Activated T-helper 1 cell treated with anti-CD3 and anti-CD28 coated beads, Interleukin-12 subunit alpha, Interleukin-12 subunit beta, Interleukin-2, Interleukin-4 antibody, amounts not matched to agents 30 ng/mL and 10 ng/mL and 1 ng/mL, durations not matched to agents 14 hours and 24 hours and 36 hours (primary cell): ENCODE measurements at regions of chr12 and their contacts with region 1.

Region 1: GRCh38 chr12:27821259-27821973 is 41.4 kb upstream of the MANSC4 start:
- DNase-seq: peak; percentile 33
- H3K4me3 Mint-ChIP-seq: peak overlapping the region; percentile 32
- H3K27ac Mint-ChIP-seq: peak overlapping the region; percentile 91
- H3K4me1 Mint-ChIP-seq: peaks cover 71% of the 10 kb centered on the region
- H3K27me3 Mint-ChIP-seq: peaks cover 22% of the 10 kb centered on the region

Region 2: GRCh38 chr12:27024291-27024690 is 797.1 kb before region 1 on chr12:
- intact Hi-C with region 1: loop called (anchors 5 kb)
- DNase-seq: no peak
- H3K4me3 Mint-ChIP-seq: peak overlapping the region; percentile 43
- H3K27ac Mint-ChIP-seq: no peak overlapping the region
- H3K4me1 Mint-ChIP-seq: peaks cover 46% of the 10 kb centered on the region
- H3K27me3 Mint-ChIP-seq: peaks cover 2% of the 10 kb centered on the region

Region 3: DNA sequence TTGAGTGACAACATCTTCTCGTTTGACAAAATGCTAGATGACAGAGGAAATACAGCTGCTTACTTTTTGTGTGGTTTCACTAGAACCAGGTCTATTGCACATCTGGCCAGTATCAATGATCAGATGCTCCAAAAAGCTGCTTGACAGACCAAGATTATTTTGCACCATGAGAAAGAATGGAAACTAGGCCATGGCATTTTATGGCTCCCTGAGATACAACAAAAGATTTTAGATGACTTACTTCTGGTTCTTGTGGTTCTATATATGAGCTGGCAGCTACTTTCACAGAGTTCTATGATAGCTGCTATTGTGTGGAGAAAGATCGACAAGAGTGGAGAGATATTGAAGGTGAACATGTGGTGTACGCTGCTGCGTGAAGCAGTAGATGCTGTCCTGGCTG is 323.3 kb before region 1 on chr12:
- intact Hi-C with region 1: loop called (anchors 1 kb)
- DNase-seq: peak; percentile 16
- H3K4me3 Mint-ChIP-seq: peak overlapping the region; percentile 3
- H3K27ac Mint-ChIP-seq: peak overlapping the region; percentile 76
- H3K4me1 Mint-ChIP-seq: peaks cover 53% of the 10 kb centered on the region
- H3K27me3 Mint-ChIP-seq: no peaks in the 10 kb centered on the region

Region 4: GRCh38 chr12:27785882-27786570 is 35.4 kb before region 1 on chr12:
- intact Hi-C with region 1: loop called (anchors 1 kb)
- DNase-seq: no peak
- H3K4me3 Mint-ChIP-seq: no peak overlapping the region
- H3K27ac Mint-ChIP-seq: peak overlapping the region; percentile 68
- H3K4me1 Mint-ChIP-seq: peaks cover 40% of the 10 kb centered on the region
- H3K27me3 Mint-ChIP-seq: no peaks in the 10 kb centered on the region

Region 5: DNA sequence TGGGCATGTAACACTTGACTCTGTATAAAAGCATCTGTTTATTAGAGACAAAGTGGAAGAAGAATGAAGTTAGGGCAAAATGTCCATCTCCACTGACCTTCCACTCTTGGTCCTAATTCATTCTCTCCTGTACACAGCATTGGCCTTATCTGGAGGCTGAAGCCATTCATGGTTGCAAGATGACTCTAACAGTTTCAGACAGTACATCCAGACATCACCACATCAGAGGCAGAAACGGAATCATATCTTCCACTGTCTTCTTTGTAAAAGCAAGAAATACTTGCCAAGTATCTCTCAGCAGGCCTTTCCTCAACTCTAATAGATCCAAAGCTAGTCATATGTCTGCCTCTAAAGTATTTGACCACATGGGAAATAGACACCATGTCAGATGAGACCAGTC is 110.0 kb after region 1 on chr12:
- intact Hi-C with region 1: no loop called
- DNase-seq: no peak
- H3K4me3 Mint-ChIP-seq: no peak overlapping the region
- H3K27ac Mint-ChIP-seq: no peak overlapping the region
- H3K4me1 Mint-ChIP-seq: peaks cover 4% of the 10 kb centered on the region
- H3K27me3 Mint-ChIP-seq: peaks cover 19% of the 10 kb centered on the region

Region 6: GRCh38 chr12:28065889-28066630 is 244.6 kb after region 1 on chr12:
- intact Hi-C with region 1: loop called (anchors 1 kb)
- DNase-seq: no peak
- H3K4me3 Mint-ChIP-seq: no peak overlapping the region
- H3K27ac Mint-ChIP-seq: no peak overlapping the region
- H3K4me1 Mint-ChIP-seq: peaks cover 17% of the 10 kb centered on the region
- H3K27me3 Mint-ChIP-seq: peaks cover 6% of the 10 kb centered on the region

Region 7: GRCh38 chr12:28127455-28127854 is 306.0 kb after region 1 on chr12:
- intact Hi-C with region 1: no loop called
- DNase-seq: no peak
- H3K4me3 Mint-ChIP-seq: no peak overlapping the region
- H3K27ac Mint-ChIP-seq: no peak overlapping the region
- H3K4me1 Mint-ChIP-seq: no peaks in the 10 kb centered on the region
- H3K27me3 Mint-ChIP-seq: peaks cover 3% of the 10 kb centered on the region

Region 8: DNA sequence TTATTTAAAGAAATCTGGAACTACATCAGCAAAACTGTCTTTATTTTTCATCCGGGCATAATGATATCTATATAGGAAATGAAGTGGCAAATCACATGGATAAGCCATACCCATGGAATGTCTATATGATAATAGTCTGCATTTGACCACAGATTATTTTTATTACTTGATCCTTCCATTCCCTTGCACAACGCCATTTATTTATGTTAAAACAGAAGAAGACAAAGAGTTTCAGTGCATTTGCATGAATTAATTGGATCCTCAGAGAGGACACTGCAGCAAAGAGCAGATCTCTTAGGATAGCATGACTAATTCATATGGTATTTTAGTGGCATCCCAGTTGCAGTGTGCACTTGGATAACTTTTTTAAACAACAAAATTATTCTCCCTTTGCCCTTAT is 713.8 kb after region 1 on chr12:
- intact Hi-C with region 1: loop called (anchors 2 kb)
- DNase-seq: no peak
- H3K4me3 Mint-ChIP-seq: no peak overlapping the region
- H3K27ac Mint-ChIP-seq: no peak overlapping the region
- H3K4me1 Mint-ChIP-seq: peaks cover 6% of the 10 kb centered on the region
- H3K27me3 Mint-ChIP-seq: no peaks in the 10 kb centered on the region